Right cardiac atrium (tissue), 5 donors: ENCODE measurements at regions of chr6 and their contacts with region 1.

Region 1: DNA sequence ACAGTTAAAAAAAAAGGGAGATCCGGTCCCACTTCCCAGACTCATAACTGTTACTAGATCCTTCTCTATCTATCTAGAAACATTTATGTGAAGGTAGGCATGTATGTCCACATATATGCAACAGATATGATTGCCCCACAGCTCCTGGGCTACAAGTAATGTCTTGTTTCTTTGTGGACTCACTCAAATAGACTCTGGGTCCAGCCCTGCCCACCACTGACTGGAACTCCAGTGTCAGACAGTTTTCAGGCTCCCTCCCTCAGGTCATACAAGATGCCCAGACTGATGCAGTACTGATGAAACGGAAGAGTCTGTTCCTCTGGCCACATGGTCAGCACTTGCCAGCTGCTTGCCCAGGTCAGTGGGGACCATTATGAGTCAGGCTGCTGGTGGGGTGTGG is 30.8 kb upstream of the IER3 start:
- DNase-seq: no peak
- ATAC-seq: no peak
- H3K4me3 ChIP-seq: no peak overlapping the region
- H3K27ac ChIP-seq: no peak overlapping the region
- H3K4me1 ChIP-seq: peaks cover 11% of the 10 kb centered on the region
- H3K27me3 ChIP-seq: no peaks in the 10 kb centered on the region

Region 2: DNA sequence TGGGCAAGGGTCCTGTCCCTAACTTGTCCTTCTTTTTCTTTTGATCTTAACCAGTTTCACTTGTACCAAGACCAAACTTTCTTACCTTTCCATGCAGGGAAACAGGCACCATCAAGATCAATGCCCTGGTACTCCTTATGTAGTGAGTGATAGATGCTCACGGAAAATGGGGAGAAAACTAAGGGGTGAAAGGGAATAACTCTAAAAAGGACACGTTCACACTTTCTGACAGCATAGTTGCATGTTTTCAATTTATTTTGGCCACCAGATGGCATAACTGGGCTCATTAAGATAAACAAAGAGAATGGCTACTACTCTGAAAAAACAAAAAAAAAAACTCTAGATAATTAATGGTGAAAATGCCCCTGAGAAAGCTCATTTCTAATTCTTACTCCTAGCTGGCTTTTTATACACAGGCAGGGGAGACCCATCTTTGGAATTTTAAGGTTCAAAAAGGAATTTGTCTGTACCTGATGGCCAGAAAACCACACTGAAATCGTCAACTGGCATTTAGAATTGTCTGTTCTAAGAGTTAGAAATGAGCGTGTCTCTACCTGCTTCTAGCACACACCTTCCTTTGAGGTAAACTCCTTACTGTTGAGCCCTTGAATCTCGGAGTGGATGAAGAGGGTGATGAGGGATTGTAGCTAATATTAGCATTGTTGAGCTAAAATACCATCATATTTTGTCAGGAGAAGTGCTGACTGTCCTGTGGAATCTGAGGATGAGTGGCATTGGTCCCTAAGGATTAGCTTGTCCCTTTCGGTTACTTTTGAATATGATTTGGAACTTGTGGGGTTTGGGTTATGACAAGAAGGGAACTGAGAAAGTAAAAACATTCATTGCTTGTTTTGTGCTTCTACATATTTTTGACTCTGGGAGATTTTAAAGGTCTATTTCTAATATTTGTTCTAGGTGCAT is 47.0 kb after region 1 on chr6:
- intact Hi-C with region 1: loop called in 1 of 4 experiments (anchors 5 kb)
- DNase-seq: no peak
- ATAC-seq: no peak
- H3K4me3 ChIP-seq: no peak overlapping the region
- H3K27ac ChIP-seq: peak overlapping the region; percentile 48
- H3K4me1 ChIP-seq: peaks cover 8% of the 10 kb centered on the region
- H3K27me3 ChIP-seq: no peaks in the 10 kb centered on the region